Heart left ventricle (tissue), 16 donors: ENCODE measurements at regions of chr4 and their contacts with region 1.

Region 1: DNA sequence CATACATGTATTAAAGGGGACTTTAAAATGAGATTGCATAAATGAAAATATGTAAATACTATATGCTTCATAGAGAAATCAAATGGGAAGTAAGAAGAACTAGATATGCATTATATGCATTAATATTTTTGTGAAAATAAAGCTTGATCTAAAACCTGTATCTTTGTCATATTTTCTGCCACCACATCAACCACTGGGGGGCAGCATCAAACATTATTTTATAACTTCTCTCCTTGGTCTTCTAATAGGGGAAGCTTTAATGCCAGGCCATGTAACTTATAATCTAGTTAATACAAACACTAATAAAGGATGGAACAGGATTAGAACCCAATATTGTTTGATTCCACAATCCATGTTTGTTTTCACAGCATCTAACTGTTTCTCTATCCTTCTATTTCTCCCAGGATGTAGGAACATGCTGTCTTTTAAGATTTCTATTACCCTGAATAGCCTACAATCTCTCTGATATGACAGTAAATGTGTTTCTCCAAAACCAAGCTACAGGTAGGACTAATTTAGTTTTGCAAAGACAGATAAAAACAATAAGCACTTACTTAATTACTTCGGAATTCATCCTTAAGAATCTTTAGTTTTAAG is 10.0 kb downstream of the QRFPR start:
- DNase-seq: peak in 3 of 5 donors; percentile 24 to 45 (median 30)
- ATAC-seq: peak in 2 of 4 donors; percentile 54 to 69
- H3K4me3 ChIP-seq: no peak overlapping the region
- H3K27ac ChIP-seq: no peak overlapping the region
- H3K4me1 ChIP-seq: peaks cover 0 to 11% (median 0%) of the 10 kb centered on the region in 12 donors
- H3K27me3 ChIP-seq: no peaks in the 10 kb centered on the region
- CTCF ChIP-seq: peak; percentile 46 to 77 (median 64)
- POLR2A ChIP-seq: no peak

Region 2: DNA sequence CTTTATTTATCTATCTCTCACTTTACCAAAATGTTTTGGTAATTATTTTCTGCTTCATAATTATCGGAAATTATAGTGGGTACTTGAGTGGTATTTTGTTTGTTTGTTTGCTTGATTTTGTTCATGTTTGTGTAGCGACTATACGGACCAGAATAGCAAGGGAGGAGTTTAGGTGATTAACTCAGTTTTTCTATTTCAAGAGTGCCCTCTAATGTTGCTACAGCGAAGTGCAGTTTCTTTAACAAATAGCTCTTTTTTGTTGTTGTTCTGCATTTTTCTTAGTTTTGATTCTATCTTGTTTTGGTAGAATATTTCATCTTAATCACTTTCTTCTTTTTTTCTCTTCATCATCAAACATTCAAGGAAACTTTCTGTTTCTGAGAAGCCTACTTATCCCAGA is 50.8 kb after region 1 on chr4:
- intact Hi-C with region 1: loop called (anchors 1 to 5 kb)
- DNase-seq: no peak
- ATAC-seq: no peak
- H3K4me3 ChIP-seq: peak overlapping the region in 9 of 12 donors; percentile 20 to 46 (median 33)
- H3K27ac ChIP-seq: peak overlapping the region in 1 of 12 donors; percentile 40
- H3K4me1 ChIP-seq: no peaks in the 10 kb centered on the region
- H3K27me3 ChIP-seq: no peaks in the 10 kb centered on the region
- CTCF ChIP-seq: peak in 11 of 12 donors; percentile 31 to 59 (median 51)
- POLR2A ChIP-seq: no peak

Region 3: DNA sequence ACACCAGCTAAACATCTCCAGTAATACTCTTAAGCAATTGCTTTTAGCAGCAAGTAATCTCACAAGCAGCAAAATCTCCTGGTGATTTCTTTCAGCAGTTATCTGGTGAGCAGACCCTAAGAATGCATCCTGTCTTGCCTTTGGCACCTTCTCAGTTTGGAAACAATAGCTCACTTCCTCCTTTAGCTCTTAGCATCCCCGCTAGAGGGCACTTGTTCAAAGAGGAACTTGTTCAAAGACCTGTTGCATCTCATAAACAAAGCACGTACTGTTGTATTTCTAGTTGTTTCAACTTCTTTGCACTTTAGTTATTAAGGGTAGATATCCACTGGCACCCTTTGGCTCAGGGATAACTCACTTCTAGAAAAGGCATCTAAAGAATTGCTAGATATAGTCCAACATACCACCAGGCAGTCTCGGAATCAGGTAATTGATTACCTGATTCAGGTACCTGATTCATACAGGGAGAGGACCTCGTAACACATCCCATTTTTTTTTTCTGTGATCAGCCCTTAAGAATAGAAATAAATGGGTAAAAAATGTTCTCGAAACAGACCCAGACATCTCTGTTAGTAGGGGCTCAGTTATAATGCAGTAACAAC is 91.9 kb after region 1 on chr4:
- intact Hi-C with region 1: loop called in 1 of 10 experiments (anchors 5 kb)
- DNase-seq: peak in 4 of 5 donors; percentile 30 to 58 (median 38)
- ATAC-seq: peak; percentile 42 to 82 (median 74)
- H3K4me3 ChIP-seq: no peak overlapping the region
- H3K27ac ChIP-seq: no peak overlapping the region
- H3K4me1 ChIP-seq: peaks cover 0 to 6% (median 0%) of the 10 kb centered on the region in 12 donors
- H3K27me3 ChIP-seq: no peaks in the 10 kb centered on the region
- CTCF ChIP-seq: peak; percentile 51 to 79 (median 68)
- POLR2A ChIP-seq: no peak

Region 4: DNA sequence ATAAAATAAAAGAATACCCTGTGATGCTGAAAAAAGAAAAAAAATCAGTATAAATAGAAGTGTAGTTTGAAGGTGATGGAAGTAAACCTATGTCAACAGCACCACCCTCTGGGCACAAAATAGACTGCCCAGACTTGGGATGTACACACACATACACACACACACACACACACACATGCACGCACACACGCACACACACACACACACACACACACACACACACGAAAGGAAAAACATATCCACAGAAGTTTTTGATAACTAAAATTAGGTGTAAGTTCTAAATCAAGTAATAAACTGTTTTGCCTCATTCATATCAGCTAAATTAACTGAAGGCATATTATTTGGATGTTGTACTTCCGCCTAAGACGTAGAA is 285.4 kb after region 1 on chr4:
- intact Hi-C with region 1: loop called (anchors 2 to 10 kb)
- DNase-seq: peak in 4 of 5 donors; percentile 33 to 50 (median 40)
- ATAC-seq: peak; percentile 76 to 91 (median 80)
- H3K4me3 ChIP-seq: no peak overlapping the region
- H3K27ac ChIP-seq: peak overlapping the region in 1 of 12 donors; percentile 43
- H3K4me1 ChIP-seq: peaks cover 0 to 11% (median 0%) of the 10 kb centered on the region in 12 donors
- H3K27me3 ChIP-seq: no peaks in the 10 kb centered on the region
- CTCF ChIP-seq: peak in 10 of 12 donors; percentile 10 to 54 (median 38)
- POLR2A ChIP-seq: no peak

Region 5: DNA sequence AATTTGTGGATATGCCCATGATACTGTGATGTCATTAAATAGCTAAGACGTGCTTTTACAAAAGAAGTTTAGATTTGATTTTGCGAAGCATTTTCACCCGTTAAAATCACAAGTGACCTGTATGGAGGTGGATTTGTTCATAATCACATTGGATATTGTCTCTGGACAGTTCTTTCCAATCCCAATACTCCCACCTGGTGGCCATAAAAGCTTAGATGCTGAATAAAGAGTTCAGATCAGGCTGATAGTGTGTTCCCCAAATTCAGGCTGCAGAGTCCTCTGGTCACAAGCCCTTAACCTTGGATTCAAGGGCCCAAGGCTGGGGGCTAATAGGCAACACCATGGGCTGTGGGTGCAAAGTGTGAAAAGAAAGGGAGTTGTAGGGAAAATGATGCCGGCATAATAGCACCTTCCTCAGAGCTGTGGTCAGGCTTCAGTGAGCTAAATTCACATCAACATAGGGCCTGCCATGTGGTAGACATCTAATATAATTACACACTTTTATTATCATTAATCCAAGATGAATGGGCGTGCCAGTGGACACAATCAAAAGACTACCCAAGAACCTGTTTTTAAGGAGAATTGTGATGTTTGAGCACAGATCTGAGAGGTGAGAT is 366.0 kb after region 1 on chr4:
- intact Hi-C with region 1: loop called in 3 of 10 experiments (anchors 2 to 10 kb)
- DNase-seq: peak in 1 of 5 donors; percentile 18
- ATAC-seq: peak in 1 of 4 donors; percentile 28
- H3K4me3 ChIP-seq: no peak overlapping the region
- H3K27ac ChIP-seq: no peak overlapping the region
- H3K4me1 ChIP-seq: peaks cover 0 to 22% (median 0%) of the 10 kb centered on the region in 12 donors
- H3K27me3 ChIP-seq: peaks cover 0 to 3% (median 0%) of the 10 kb centered on the region in 9 donors
- CTCF ChIP-seq: peak in 11 of 12 donors; percentile 14 to 61 (median 44)
- POLR2A ChIP-seq: no peak